Activated naive CD4-positive, alpha-beta T cell treated with anti-CD3 and anti-CD28 coated beads for 36 hours (primary cell): ENCODE measurements at regions of chr13 and their contacts with region 1.

Region 1: GRCh38 chr13:40922437-40923040 is 96.6 kb downstream of the ELF1 start:
- DNase-seq: no peak
- H3K4me3 Mint-ChIP-seq: peak overlapping the region; percentile 54
- H3K27ac Mint-ChIP-seq: peak overlapping the region; percentile 61
- H3K4me1 Mint-ChIP-seq: peaks cover 15% of the 10 kb centered on the region
- H3K27me3 Mint-ChIP-seq: no peaks in the 10 kb centered on the region

Region 2: GRCh38 chr13:39474600-39474999 is 1447.9 kb before region 1 on chr13:
- CTCF ChIA-PET with region 1: no interaction called
- intact Hi-C with region 1: no loop called
- DNase-seq: no peak
- H3K4me3 Mint-ChIP-seq: no peak overlapping the region
- H3K27ac Mint-ChIP-seq: no peak overlapping the region
- H3K4me1 Mint-ChIP-seq: no peaks in the 10 kb centered on the region
- H3K27me3 Mint-ChIP-seq: peaks cover 8% of the 10 kb centered on the region

Region 3: GRCh38 chr13:40770934-40771618 is 151.5 kb before region 1 on chr13 and contains the start of gene MRPS31:
- CTCF ChIA-PET with region 1: no interaction called
- intact Hi-C with region 1: loop called (anchors 1 kb)
- DNase-seq: peak; percentile 95
- H3K4me3 Mint-ChIP-seq: peak within 1 kb of the TSS; percentile 98
- H3K27ac Mint-ChIP-seq: peak within 1 kb of the TSS; percentile 95
- H3K4me1 Mint-ChIP-seq: peaks cover 33% of the 10 kb centered on the region
- H3K27me3 Mint-ChIP-seq: no peaks in the 10 kb centered on the region
- total RNA-seq, gene MRPS31: 28.4 to 28.8 TPM

Region 4: GRCh38 chr13:40982772-40983171 is 60.2 kb after region 1 on chr13:
- CTCF ChIA-PET with region 1: interaction called, 5 read pairs
- intact Hi-C with region 1: loop called (anchors 1 kb)
- DNase-seq: peak; percentile 60
- H3K4me3 Mint-ChIP-seq: peak overlapping the region; percentile 90
- H3K27ac Mint-ChIP-seq: peak overlapping the region; percentile 100
- H3K4me1 Mint-ChIP-seq: peaks cover 55% of the 10 kb centered on the region
- H3K27me3 Mint-ChIP-seq: no peaks in the 10 kb centered on the region

Region 5: GRCh38 chr13:40999416-40999815 is 76.9 kb after region 1 on chr13:
- CTCF ChIA-PET with region 1: no interaction called
- intact Hi-C with region 1: no loop called
- DNase-seq: no peak
- H3K4me3 Mint-ChIP-seq: no peak overlapping the region
- H3K27ac Mint-ChIP-seq: peak overlapping the region; percentile 38
- H3K4me1 Mint-ChIP-seq: peaks cover 80% of the 10 kb centered on the region
- H3K27me3 Mint-ChIP-seq: no peaks in the 10 kb centered on the region

Region 6: DNA sequence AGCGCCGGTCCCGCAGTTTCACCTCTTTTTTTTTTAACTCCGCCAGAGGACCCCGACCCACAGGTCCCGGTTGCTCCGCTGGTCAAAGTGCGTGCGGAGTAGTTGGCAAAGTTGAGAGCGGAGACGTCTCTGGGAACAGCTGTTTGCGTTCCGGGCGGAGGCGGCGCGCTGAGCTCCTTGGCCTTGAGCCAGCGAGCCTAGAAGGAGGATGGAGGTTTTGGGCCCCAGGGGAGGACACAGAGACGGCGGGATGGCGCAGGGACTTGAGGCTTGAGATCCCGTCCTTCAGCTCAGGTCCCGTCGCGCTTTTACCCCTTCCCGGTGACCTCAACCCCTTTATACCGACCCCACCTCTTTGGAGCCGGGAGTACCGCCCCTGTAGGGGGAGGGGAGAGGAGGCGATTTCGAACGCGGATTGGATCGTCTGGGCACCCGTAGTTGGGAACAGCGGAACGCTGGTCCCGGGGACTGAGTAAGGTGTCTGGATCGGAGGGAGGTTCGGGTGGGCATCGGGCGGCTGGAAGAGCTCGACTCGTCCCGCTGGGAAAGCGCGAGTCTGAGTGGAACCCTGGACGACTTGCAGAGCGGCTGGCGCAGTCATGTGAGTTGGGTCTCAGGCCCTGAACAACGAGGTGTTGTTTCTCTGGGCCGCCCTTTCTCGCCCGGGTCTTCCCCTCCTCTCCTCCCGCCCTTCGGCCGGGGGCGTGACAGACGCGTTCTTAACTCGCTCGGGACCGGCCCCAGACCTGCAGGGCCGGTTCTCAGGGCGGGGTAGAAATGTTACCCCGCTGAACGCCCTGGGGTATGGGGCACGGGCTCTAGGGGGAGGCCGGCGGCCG is 138.8 kb after region 1 on chr13 and contains the start of gene WBP4:
- CTCF ChIA-PET with region 1: no interaction called
- intact Hi-C with region 1: loop called (anchors 1 kb)
- DNase-seq: peak; percentile 88
- H3K4me3 Mint-ChIP-seq: peak within 1 kb of the TSS; percentile 95
- H3K27ac Mint-ChIP-seq: peak within 1 kb of the TSS; percentile 98
- H3K4me1 Mint-ChIP-seq: peaks cover 45% of the 10 kb centered on the region
- H3K27me3 Mint-ChIP-seq: peaks cover 4% of the 10 kb centered on the region
- total RNA-seq, gene WBP4: 8.1 to 8.2 TPM

Region 7: DNA sequence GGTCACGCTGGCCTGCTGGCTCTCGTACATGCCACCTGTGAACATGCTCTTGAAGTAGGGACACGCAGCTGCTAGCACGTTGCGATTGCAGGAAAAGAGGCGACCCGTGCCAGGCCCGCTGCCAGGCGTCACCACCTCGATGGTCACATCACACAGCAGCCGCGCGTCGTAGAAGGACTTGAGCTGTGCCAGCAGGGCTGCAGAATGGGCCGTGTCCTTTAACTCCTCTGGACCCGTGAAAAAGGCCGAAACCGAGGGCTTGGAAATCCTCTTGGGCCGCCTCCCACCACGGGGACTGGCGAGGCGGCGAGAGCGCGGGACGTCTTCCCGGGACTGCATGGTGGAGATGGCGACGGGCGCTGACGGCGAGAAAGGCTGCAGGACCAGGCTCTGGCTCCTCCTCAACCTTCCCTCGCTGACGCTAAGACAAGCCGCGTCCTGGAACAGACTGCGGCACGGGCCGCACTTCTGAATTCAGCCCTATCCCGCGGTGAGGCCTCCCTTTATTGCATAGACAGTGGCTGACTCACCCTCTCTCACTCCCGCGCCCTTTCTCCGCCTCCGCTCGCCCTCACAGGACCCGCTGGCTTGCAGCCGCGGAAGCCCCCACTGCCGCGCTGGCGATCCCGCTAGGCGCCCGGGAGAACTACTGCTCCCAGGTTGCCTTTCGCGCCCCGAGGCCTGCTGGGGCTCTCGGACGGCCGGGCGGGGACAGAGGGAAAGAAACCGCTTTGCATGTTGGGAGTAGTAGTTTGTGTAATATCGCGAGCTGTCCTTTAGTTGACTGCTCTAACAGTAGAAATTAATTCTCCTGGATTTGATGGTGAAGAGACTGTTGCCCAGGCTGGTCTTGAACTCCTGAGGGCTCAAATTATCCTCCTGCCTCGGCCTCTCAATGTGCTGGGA is 271.6 kb after region 1 on chr13 and contains the start of gene KBTBD7:
- CTCF ChIA-PET with region 1: no interaction called
- intact Hi-C with region 1: loop called (anchors 1 kb)
- DNase-seq: peak; percentile 95
- H3K4me3 Mint-ChIP-seq: peak within 1 kb of the TSS; percentile 90
- H3K27ac Mint-ChIP-seq: peak within 1 kb of the TSS; percentile 89
- H3K4me1 Mint-ChIP-seq: peaks cover 37% of the 10 kb centered on the region
- H3K27me3 Mint-ChIP-seq: no peaks in the 10 kb centered on the region
- total RNA-seq, gene KBTBD7: 4.2 to 4.3 TPM